Common myeloid progenitor, CD34-positive (primary cell): ENCODE measurements at regions of chr11 and their contacts with region 1.

Region 1: DNA sequence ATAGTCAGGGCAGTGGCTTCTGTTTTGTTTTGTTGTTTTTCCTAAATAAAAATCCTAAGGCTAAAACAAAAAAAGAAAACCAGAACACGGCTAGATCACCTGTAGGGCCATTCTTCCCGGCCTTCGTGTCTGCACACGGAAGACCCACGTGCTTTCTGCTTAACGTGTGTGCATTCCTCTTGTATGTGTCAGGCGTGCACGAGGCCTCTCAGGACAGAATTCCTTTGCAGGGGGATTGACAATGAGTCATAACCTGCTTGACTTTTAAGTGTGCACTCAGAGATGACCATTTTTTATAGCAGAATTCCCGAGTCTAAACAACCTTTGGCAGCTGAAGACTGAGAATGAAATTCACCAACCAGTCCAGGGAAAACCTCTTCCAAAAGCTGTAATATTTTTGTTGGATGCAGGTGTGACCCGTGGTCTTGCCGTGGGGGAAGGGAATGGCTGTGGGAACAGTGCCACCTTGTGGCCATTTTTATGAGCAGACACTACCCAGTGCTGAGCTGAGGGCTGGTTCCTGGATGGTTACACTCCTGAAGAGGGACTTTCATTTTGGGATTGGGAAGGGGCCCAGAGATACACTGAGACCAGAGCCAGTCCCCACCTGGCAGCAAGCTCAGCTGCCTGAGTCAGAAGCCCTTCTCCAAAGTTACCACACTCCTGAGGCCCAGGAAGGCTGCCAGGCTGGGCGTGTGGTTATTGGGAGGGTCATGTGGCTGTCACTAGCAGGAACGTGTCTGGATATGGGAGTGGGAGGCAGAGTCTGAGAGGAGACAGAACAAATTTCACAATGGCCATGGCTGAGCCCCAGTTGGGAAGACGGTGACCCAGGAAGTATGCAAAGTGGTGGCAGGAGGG is 35.8 kb upstream of the DKK3 start:
- DNase-seq: peak; percentile 48 to 62 (median 50)
- H3K4me3 ChIP-seq: no peak overlapping the region
- H3K27ac ChIP-seq: no peak overlapping the region
- H3K4me1 ChIP-seq: peaks cover 0 to 8% (median 3%) of the 10 kb centered on the region in 4 experiments
- H3K27me3 ChIP-seq: no peaks in the 10 kb centered on the region

Region 2: DNA sequence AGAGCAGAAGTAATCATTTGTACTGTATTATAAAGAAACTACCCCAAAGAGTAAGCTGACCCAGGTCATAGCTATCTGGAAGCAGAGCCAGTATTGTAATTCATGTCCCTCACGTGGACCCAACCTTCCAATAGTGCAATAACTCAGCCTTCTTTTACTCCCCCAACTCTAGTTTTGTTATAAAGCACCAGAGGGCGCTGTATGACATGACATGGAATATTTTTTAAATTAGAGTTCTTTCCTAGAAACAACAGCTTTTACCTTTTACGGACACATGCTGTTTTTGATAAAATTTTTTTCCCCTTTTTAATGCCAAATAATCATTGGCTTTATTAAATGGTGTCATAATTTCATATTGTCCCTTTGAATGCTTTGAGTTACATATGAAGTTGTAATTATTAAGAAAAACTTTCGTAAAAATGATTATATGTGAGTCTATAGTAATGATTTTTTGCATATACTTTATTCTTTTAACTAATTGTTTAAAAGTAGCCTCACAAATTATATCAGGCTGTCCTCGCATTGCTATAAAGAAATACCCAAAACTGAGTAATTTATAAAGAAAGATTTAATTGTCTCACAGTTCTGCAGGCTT is 112.6 kb before region 1 on chr11:
- CTCF ChIA-PET with region 1: interaction called, 14 read pairs
- POLR2A ChIA-PET with region 1: no interaction called
- DNase-seq: peak; percentile 42 to 71 (median 67)
- H3K4me3 ChIP-seq: no peak overlapping the region
- H3K27ac ChIP-seq: no peak overlapping the region
- H3K4me1 ChIP-seq: peaks cover 0 to 1% (median 0%) of the 10 kb centered on the region in 4 experiments
- H3K27me3 ChIP-seq: no peaks in the 10 kb centered on the region

Region 3: GRCh38 chr11:12061851-12062560 is 17.8 kb after region 1 on chr11:
- CTCF ChIA-PET with region 1: interaction called, 18 read pairs
- POLR2A ChIA-PET with region 1: no interaction called
- DNase-seq: peak in 2 of 3 donors; percentile 48 to 65
- H3K4me3 ChIP-seq: no peak overlapping the region
- H3K27ac ChIP-seq: no peak overlapping the region
- H3K4me1 ChIP-seq: peaks cover 6 to 15% (median 11%) of the 10 kb centered on the region in 4 experiments
- H3K27me3 ChIP-seq: no peaks in the 10 kb centered on the region